ENCODE measurements at regions of chr1 and their contacts with region 1.

Region 1: DNA sequence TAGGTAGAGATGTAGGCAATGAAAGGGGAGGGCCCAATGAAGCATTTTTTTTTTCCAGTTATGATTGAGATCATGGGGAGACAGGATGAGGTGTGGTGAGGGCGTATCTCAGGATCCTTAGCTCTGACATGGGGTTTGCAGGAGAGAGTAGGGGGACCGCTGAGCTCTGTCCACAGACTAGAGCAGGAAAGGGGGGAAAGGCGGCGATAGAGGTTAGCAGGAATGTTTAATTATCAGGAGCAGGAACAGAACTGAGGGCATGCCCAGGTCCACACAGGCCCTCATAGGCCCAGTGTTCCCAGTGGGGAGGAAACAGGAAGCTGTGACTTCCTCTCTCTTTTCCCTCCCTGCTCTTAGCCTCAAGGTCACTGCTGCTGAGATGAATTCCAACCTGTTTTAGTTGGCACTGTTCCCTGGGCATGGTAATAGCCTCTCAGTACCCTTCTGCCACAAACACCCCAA is 876 bp upstream of the RXFP4 start:
- DNase-seq: peak; percentile 60 to 86
- H3K4me3 ChIP-seq: no peak overlapping the region
- H3K27ac ChIP-seq: peak overlapping the region; percentile 76 to 89 (median 85)
- H3K4me1 ChIP-seq: peaks cover 33 to 77% (median 53%) of the 10 kb centered on the region in 4 donors
- H3K27me3 ChIP-seq: no peaks in the 10 kb centered on the region
- CTCF ChIP-seq: no peak
- EP300 ChIP-seq: no peak
- POLR2A ChIP-seq: no peak

Region 2: GRCh38 chr1:155989242-155990004 is 48.9 kb after region 1 on chr1:
- intact Hi-C with region 1: loop called (anchors 5 kb)
- DNase-seq: peak; percentile 79 to 92
- H3K4me3 ChIP-seq: peak overlapping the region; percentile 23 to 36 (median 32)
- H3K27ac ChIP-seq: peak overlapping the region in 4 of 5 donors; percentile 4 to 65 (median 52)
- H3K4me1 ChIP-seq: peaks cover 3 to 37% (median 12%) of the 10 kb centered on the region in 4 donors
- H3K27me3 ChIP-seq: no peaks in the 10 kb centered on the region
- CTCF ChIP-seq: peak in 6 of 7 experiments; percentile 75 to 99 (median 98)
- EP300 ChIP-seq: no peak
- POLR2A ChIP-seq: no peak